CD8-positive, alpha-beta T cell (primary cell): ENCODE measurements at regions of chr18 and their contacts with region 1.

Region 1: GRCh38 chr18:741931-742512 is 29.6 kb upstream of the ENOSF1 start:
- DNase-seq: peak in 2 of 9 experiments; percentile 59 to 72
- ATAC-seq: peak; percentile 76
- H3K4me3 ChIP-seq: no peak overlapping the region
- H3K4me3 Mint-ChIP-seq: no peak overlapping the region
- H3K27ac ChIP-seq: no peak overlapping the region
- H3K27ac Mint-ChIP-seq: no peak overlapping the region
- H3K4me1 ChIP-seq: no peaks in the 10 kb centered on the region
- H3K4me1 Mint-ChIP-seq: peaks cover 2% of the 10 kb centered on the region
- H3K27me3 ChIP-seq: no peaks in the 10 kb centered on the region
- H3K27me3 Mint-ChIP-seq: no peaks in the 10 kb centered on the region
- CTCF ChIP-seq: peak; percentile 89

Region 2: GRCh38 chr18:830315-830901 is 88.4 kb after region 1 on chr18:
- CTCF ChIA-PET with region 1: interaction called, 246 read pairs
- POLR2A ChIA-PET with region 1: interaction called, 7 read pairs
- intact Hi-C with region 1: loop called (anchors 1 kb)
- DNase-seq: peak in 6 of 9 experiments; percentile 19 to 85 (median 56)
- ATAC-seq: peak; percentile 81
- H3K4me3 ChIP-seq: peak overlapping the region in 1 of 2 experiments; percentile 22
- H3K4me3 Mint-ChIP-seq: peak overlapping the region; percentile 59
- H3K27ac ChIP-seq: peak overlapping the region; percentile 26 to 83
- H3K27ac Mint-ChIP-seq: peak overlapping the region; percentile 68
- H3K4me1 ChIP-seq: peaks cover 23% of the 10 kb centered on the region
- H3K4me1 Mint-ChIP-seq: peaks cover 26% of the 10 kb centered on the region
- H3K27me3 ChIP-seq: no peaks in the 10 kb centered on the region
- H3K27me3 Mint-ChIP-seq: no peaks in the 10 kb centered on the region
- CTCF ChIP-seq: no peak

Region 3: DNA sequence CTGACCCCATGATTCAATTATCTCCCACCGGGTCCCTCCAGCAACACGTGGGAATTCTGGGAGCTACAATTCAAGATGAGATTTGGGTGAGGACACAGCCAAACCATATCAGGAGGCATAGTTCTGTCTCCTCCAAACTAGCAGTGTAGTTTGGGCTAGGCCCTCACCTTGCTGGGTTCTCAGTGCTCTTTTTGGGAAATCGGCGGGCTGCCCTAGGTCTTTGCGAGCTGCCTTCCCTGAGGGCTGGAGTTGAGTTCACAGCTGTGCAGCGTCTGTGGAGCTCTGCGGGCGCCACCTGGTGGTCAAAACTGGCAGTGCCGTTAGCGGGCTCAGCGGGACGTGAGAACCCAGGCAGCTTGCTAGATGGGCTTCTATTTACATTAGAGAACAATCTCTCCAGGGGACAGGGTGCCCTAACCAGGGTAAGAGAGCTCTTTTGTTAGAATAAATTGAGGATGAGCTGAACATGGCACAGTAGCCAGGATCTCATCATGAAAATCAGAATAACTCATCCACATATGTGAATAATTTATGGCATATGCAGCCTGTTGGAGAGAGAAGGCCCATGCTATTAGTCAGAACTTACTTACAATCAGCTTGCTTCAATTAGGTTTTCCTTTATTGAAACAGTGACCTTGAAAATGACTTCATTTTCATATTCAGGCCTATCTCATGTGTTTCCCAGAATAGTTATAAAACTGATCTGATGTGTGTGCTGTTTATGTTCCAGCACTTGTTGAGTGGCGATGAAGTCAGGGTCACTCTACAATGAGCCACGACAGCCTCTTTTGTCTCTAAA is 97.4 kb after region 1 on chr18:
- CTCF ChIA-PET with region 1: interaction called, 246 read pairs
- POLR2A ChIA-PET with region 1: no interaction called
- intact Hi-C with region 1: loop called (anchors 1 kb)
- DNase-seq: peak; percentile 77 to 95 (median 85)
- ATAC-seq: peak; percentile 97
- H3K4me3 ChIP-seq: no peak overlapping the region
- H3K4me3 Mint-ChIP-seq: no peak overlapping the region
- H3K27ac ChIP-seq: no peak overlapping the region
- H3K27ac Mint-ChIP-seq: no peak overlapping the region
- H3K4me1 ChIP-seq: peaks cover 4% of the 10 kb centered on the region
- H3K4me1 Mint-ChIP-seq: peaks cover 4% of the 10 kb centered on the region
- H3K27me3 ChIP-seq: no peaks in the 10 kb centered on the region
- H3K27me3 Mint-ChIP-seq: no peaks in the 10 kb centered on the region
- CTCF ChIP-seq: peak; percentile 95